Mucosa of descending colon (tissue), 3 donors: ENCODE measurements at regions of chr2 and their contacts with region 1.

Region 1: GRCh38 chr2:86221066-86221684 is 21.9 kb downstream of the MRPL35 start:
- DNase-seq: peak in 2 of 3 donors; percentile 54 to 55
- ATAC-seq: peak; percentile 84
- H3K4me3 ChIP-seq: no peak overlapping the region
- H3K4me1 ChIP-seq: no peaks in the 10 kb centered on the region
- CTCF ChIP-seq: peak; percentile 46

Region 2: GRCh38 chr2:85976106-85976920 is 244.9 kb before region 1 on chr2:
- intact Hi-C with region 1: no loop called
- DNase-seq: no peak
- ATAC-seq: no peak
- H3K4me3 ChIP-seq: no peak overlapping the region
- H3K4me1 ChIP-seq: no peaks in the 10 kb centered on the region
- CTCF ChIP-seq: no peak

Region 3: DNA sequence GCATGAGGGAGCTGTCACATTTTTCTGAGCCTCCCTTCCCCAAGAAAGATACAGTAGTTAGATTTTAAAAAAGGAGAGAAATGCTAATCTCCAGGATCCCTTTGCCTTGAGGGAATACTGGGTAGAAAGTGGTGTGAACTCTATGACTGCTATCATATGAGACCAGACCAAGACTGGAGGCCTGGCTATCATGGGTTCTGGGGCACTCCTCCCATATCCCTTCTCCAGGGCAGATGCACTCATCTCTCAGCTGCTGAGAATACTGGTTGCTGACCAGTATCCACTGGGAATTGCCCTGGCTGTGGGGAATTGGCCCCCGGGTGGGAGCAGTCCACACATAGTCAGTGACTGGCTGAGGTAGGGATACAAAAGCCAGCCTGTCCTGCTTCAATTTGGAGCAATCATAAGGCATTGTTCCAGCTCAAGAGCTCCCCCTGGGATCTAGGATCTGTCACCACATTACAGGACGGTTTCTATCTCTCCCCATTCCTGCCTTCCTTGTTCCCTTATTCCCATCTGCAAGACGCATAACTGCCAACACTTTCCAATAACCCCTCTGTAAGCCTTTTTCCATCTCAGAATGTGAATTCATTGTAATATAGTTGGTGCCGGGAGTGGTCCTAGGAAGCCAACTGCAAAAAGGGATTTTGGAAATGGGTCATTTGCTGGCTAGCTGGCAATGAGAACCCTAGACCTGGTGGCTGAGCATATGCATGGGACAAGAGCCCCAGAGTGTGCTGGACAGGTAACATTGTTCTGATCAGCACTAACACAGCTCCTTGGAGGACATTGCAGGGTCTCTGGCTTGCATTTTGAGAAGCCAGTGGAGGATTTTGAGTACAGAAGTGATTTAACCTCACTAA is 151.7 kb after region 1 on chr2:
- intact Hi-C with region 1: loop called (anchors 5 to 10 kb)
- DNase-seq: peak in 2 of 3 donors; percentile 37 to 81
- ATAC-seq: peak; percentile 83
- H3K4me3 ChIP-seq: no peak overlapping the region
- H3K4me1 ChIP-seq: peaks cover 18% of the 10 kb centered on the region
- CTCF ChIP-seq: peak; percentile 37